Aorta (tissue), 5 donors: ENCODE measurements at regions of chr18 and their contacts with region 1.

Region 1: DNA sequence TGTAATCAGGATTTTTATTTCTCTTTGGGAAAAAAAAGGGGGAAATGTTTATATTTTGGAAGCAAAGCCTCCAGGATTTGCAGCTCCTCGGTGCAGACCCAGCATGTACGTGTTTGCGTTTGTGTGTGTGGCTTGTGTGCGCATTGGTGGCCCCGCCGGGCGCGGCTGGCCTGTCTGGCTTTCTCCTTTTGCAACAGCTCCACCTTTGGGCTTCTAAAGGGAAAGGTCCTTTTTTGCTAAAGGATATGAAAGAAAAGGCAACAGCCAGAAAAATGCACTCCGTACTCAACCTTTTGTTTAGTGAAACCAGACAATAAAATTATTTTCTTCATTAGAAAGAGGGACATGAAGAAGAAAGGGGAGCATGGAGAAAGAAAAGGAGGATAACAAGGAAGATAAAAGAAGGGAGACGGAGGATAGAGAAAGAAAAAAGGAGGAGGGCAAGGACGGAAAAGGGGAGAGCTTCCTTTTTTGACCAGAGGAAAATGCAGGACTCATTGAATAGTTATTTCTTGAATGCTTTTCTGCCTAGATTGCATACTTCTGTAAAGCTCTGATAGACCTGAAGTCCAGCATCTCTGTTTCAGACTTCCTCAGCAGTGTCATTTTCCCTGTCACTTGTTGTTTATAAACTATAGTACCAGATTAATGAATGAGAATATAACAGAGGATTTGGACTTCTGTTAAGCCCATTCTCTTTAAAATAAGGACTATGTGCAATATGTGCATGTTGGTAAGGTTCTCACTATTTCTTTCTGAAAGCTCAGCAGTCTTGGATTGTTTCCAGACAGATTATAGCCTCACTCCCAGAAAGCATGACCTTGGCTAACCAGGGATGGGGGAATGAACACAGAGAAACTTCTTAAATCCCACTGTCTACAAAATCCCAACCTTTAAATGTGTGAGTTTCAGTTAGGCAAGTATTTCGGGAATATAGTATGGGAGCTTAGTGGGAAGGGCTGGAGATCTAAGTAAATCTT is 563.1 kb upstream of the PIK3C3 start:
- DNase-seq: peak; percentile 47 to 75
- ATAC-seq: peak; percentile 71
- H3K4me3 ChIP-seq: no peak overlapping the region
- H3K27ac ChIP-seq: no peak overlapping the region
- H3K4me1 ChIP-seq: no peaks in the 10 kb centered on the region
- H3K27me3 ChIP-seq: no peaks in the 10 kb centered on the region

Region 2: DNA sequence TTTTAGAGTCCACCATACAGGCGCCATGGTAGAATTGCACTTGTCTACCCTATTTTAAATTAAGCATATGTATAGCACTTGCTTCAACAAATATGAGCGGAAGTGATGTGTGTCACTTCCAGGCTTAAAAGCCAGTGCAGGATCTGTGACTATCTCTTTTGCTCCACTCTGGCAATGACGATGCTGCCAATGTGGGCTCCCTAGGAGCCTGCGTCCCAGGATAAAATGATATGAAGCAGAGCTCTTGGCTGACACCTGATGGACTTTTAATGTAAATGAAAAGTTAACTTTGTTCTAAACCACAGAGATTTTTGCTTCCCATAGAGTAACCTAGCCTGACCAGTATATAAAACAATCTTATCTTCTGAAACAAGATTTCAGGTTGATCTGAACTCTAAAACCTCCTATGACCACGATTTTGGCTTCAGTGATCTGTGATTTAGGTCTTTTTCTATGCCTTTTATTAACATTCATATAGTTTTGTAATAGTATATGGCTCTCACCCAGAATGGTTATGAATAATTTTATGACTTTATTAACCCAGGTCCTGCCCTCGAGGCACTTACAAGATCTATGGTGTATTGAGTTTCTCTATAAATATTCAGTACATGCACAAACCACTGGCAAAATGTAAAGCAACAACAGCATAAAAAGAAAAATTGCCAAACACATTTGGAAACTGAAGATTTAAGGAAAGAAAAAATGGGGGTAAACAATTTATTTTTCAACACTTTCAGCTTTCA is 140.6 kb after region 1 on chr18:
- intact Hi-C with region 1: loop called in 1 of 2 experiments (anchors 10 kb)
- DNase-seq: no peak
- ATAC-seq: no peak
- H3K4me3 ChIP-seq: no peak overlapping the region
- H3K27ac ChIP-seq: no peak overlapping the region
- H3K4me1 ChIP-seq: no peaks in the 10 kb centered on the region
- H3K27me3 ChIP-seq: no peaks in the 10 kb centered on the region

Region 3: GRCh38 chr18:41745166-41746049 is 353.5 kb after region 1 on chr18:
- intact Hi-C with region 1: loop called in 1 of 2 experiments (anchors 10 kb)
- DNase-seq: peak in 1 of 2 donors; percentile 71
- ATAC-seq: no peak
- H3K4me3 ChIP-seq: no peak overlapping the region
- H3K27ac ChIP-seq: no peak overlapping the region
- H3K4me1 ChIP-seq: no peaks in the 10 kb centered on the region
- H3K27me3 ChIP-seq: no peaks in the 10 kb centered on the region